Activated naive CD8-positive, alpha-beta T cell treated with anti-CD3 and anti-CD28 coated beads, Interleukin-2, amount 10 ng/mL, durations not matched to agents 7 days and 5 days (primary cell): ENCODE measurements at regions of chr10 and their contacts with region 1.

Region 1: GRCh38 chr10:87861953-87862678 is 1.2 kb downstream of the KLLN start:
- DNase-seq: peak; percentile 95
- ATAC-seq: peak; percentile 65
- H3K4me3 Mint-ChIP-seq: peak overlapping the region; percentile 92
- H3K27ac Mint-ChIP-seq: peak overlapping the region; percentile 95
- H3K4me1 Mint-ChIP-seq: peaks cover 21% of the 10 kb centered on the region
- H3K27me3 Mint-ChIP-seq: no peaks in the 10 kb centered on the region

Region 2: DNA sequence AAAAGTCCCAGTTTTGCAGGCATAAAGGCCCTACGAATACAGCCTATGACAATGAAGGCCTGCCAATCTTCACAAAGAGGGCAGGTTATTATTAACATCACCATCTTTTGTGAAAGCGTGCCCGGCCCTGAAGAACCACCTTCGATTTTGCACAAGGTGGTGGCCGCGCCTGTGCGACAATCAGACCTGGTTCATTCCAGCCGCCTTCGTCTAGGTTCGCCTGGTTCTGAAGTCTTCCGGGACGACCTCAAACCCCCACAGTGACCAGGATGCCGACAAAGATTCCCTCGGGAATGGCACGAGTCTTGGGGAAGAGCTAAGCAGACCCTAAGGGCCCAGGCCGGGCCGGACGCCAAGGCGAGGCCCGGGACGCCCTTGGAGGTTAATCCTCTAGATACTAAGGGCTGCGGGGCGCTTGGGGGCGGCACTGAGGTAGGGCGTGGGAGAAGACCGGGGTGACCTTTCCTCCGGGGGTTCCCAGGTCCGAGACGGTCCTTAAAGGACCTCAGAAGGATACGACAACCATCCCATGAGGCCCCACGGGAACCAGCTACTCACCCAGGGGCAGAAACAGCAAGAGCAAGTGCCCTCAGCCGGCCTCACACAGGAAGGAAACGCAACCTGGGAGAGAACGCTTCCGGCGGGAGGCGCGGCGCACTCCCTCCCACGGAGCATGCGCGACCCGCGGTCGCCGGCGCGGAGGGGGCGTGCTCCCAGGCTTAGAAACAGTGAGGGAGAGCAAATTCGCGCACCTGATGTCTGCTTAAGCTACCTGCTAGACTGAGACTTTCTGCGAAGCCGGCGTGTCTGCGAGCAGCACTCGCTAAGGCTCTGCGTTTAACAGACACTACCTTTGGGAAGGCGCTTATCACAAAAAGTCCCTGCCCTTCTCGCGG is 44.3 kb before region 1 on chr10 and contains the start of gene ATAD1:
- POLR2A ChIA-PET with region 1: interaction called, 40 read pairs
- DNase-seq: peak; percentile 92
- ATAC-seq: peak; percentile 93
- H3K4me3 Mint-ChIP-seq: peak within 1 kb of the TSS; percentile 89
- H3K27ac Mint-ChIP-seq: peak within 1 kb of the TSS; percentile 95
- H3K4me1 Mint-ChIP-seq: peaks cover 30% of the 10 kb centered on the region
- H3K27me3 Mint-ChIP-seq: no peaks in the 10 kb centered on the region
- total RNA-seq, gene ATAD1: 45.7 to 45.9 TPM

Region 3: GRCh38 chr10:88066876-88067275 is 204.8 kb after region 1 on chr10:
- POLR2A ChIA-PET with region 1: interaction called, 12 read pairs
- DNase-seq: no peak
- ATAC-seq: peak; percentile 60
- H3K4me3 Mint-ChIP-seq: peak overlapping the region; percentile 42
- H3K27ac Mint-ChIP-seq: peak overlapping the region; percentile 75
- H3K4me1 Mint-ChIP-seq: peaks cover 53% of the 10 kb centered on the region
- H3K27me3 Mint-ChIP-seq: no peaks in the 10 kb centered on the region

Region 4: GRCh38 chr10:88114368-88114767 is 252.3 kb after region 1 on chr10:
- POLR2A ChIA-PET with region 1: interaction called, 12 read pairs
- DNase-seq: no peak
- ATAC-seq: no peak
- H3K4me3 Mint-ChIP-seq: no peak overlapping the region
- H3K27ac Mint-ChIP-seq: no peak overlapping the region
- H3K4me1 Mint-ChIP-seq: peaks cover 11% of the 10 kb centered on the region
- H3K27me3 Mint-ChIP-seq: no peaks in the 10 kb centered on the region

Region 5: DNA sequence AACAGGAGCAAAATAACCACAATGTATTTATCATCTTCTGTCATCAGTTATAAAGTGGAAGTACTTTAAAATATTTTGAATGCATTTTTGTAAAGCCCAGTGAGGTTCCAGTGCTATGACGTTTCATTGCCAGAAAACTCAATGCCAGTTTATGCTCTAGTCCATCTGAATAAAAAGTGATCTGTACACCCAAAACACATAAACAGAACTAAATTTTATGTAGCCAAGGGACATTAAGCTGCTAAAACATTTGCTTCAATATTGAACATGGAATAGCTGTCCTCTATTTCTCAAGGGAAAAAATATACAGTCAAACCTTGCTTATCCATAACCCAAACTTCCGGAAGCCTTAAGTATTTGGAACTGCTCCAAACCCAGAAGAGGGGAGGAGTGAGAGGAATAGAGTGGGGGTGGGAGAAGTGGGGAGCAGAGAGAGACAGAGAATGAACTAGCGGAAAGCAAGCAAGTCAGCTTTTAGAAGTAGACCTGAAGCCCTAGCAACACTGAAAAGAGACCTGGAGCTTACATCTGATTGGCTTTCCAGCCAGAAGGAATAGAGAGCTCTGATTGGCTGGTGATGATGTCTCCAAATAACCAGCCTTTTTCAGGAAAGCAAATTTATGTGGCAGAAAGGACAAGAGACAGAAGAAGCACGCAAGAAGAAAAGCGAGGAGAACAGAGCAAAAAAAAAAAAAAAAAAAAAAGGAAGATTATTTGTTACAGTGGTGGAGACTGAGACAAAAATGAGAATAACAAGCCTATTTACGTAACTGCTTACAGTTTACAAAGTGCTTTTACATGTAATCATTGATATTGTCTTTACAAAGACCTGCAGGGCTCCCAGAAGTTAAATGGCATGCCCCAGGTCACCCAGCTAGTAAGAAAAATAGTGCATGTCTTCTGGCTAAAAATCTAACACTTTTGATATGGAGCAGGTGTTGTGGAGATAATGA is 525.0 kb after region 1 on chr10:
- POLR2A ChIA-PET with region 1: interaction called, 97 read pairs
- DNase-seq: no peak
- ATAC-seq: peak; percentile 23
- H3K4me3 Mint-ChIP-seq: no peak overlapping the region
- H3K27ac Mint-ChIP-seq: no peak overlapping the region
- H3K4me1 Mint-ChIP-seq: peaks cover 28% of the 10 kb centered on the region
- H3K27me3 Mint-ChIP-seq: no peaks in the 10 kb centered on the region